Psoas muscle (tissue), 8 donors: ENCODE measurements at regions of chr11 and their contacts with region 1.

Region 1: DNA sequence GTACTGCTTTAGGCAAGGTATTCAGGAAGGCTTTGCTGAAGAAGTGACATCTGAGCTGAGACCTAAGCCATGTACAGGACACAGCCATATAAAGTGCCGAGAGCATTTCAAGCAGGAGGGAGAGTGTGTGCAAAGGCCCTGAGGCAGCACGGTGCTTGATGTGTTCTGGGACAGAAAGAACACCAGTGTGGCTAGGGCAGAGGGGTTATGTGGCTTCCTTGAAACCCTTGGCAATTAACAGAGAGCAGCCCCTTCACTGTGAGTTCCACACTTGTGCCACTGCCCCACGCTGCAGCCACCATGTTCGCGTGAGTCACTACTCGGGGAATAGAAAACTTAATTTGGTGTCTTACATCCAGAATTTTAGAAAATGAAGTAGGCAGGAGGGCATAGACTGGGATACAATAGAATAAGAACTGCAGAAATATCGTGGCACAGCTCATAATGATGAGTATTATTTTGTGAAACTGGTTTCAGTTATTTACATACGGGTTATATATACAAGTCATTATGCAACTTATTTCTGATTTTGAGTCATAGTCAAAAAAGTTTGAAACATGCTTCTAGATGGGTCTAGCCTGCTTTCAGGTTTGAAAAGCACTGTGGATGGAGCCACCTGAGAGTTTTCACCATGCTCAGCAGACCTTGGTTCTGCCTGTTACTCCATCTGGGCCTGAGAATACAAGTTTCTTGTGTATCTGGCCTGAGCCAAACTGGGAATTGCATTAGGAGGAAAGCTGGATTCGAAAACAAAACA is 11.8 kb downstream of the IL10RA start:
- DNase-seq: no peak
- ATAC-seq: no peak
- H3K4me3 ChIP-seq: no peak overlapping the region
- H3K27ac ChIP-seq: no peak overlapping the region
- H3K4me1 ChIP-seq: no peaks in the 10 kb centered on the region
- H3K27me3 ChIP-seq: peaks cover 0 to 2% (median 0%) of the 10 kb centered on the region in 3 donors
- CTCF ChIP-seq: no peak

Region 2: DNA sequence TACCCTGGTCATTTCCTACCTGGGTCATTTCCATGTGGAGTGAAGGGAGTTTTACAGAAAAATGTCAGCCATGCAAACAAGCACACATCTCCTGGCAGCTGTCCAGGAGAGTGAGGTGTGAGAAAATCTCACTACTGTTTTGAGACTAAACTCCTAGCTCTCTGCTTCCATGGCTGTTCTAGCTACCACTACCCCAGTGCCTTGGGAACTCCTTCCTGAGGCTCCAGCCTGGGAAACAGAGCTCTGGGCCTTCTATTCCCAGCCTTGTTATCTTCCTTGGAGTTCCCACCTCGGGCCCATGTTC is 66.0 kb before region 1 on chr11:
- intact Hi-C with region 1: loop called in 1 of 2 experiments (anchors 10 kb)
- DNase-seq: no peak
- ATAC-seq: no peak
- H3K4me3 ChIP-seq: no peak overlapping the region
- H3K27ac ChIP-seq: no peak overlapping the region
- H3K4me1 ChIP-seq: no peaks in the 10 kb centered on the region
- H3K27me3 ChIP-seq: peaks cover 0 to 9% (median 0%) of the 10 kb centered on the region in 3 donors
- CTCF ChIP-seq: no peak